IMR-90 (cell line): ENCODE measurements at regions of chr5 and their contacts with region 1.

Region 1: GRCh38 chr5:68499987-68500386 is 284.4 kb downstream of the PIK3R1 start:
- DNase-seq: peak; percentile 81
- ATAC-seq: peak; percentile 70
- H3K4me3 ChIP-seq: no peak overlapping the region
- H3K27ac ChIP-seq: peak overlapping the region; percentile 9; the same call in 1 of the 2 replicates
- H3K4me1 ChIP-seq: peaks cover 6% of the 10 kb centered on the region; the same call in 1 of the 2 replicates
- H3K27me3 ChIP-seq: no peaks in the 10 kb centered on the region
- CTCF ChIP-seq: no peak
- POLR2A ChIP-seq: no peak
- RAD21 ChIP-seq: no peak

Region 2: GRCh38 chr5:67530609-67531255 is 969.3 kb before region 1 on chr5:
- CTCF ChIA-PET with region 1: no interaction called
- POLR2A ChIA-PET with region 1: no interaction called
- dilution Hi-C with region 1: no loop called
- in situ Hi-C with region 1: no loop called
- intact Hi-C with region 1: no loop called
- DNase-seq: no peak
- ATAC-seq: no peak
- H3K4me3 ChIP-seq: no peak overlapping the region
- H3K27ac ChIP-seq: no peak overlapping the region
- H3K4me1 ChIP-seq: no peaks in the 10 kb centered on the region
- H3K27me3 ChIP-seq: no peaks in the 10 kb centered on the region
- CTCF ChIP-seq: no peak
- POLR2A ChIP-seq: no peak
- RAD21 ChIP-seq: no peak

Region 3: GRCh38 chr5:68435347-68436010 is 64.5 kb before region 1 on chr5:
- CTCF ChIA-PET with region 1: no interaction called
- POLR2A ChIA-PET with region 1: no interaction called
- dilution Hi-C with region 1: no loop called
- in situ Hi-C with region 1: no loop called
- intact Hi-C with region 1: loop called (anchors 2 kb)
- DNase-seq: no peak
- ATAC-seq: no peak
- H3K4me3 ChIP-seq: no peak overlapping the region
- H3K27ac ChIP-seq: no peak overlapping the region
- H3K4me1 ChIP-seq: peaks cover 7% of the 10 kb centered on the region; the same call in 1 of the 2 replicates
- H3K27me3 ChIP-seq: no peaks in the 10 kb centered on the region
- CTCF ChIP-seq: no peak
- POLR2A ChIP-seq: no peak
- RAD21 ChIP-seq: no peak

Region 4: DNA sequence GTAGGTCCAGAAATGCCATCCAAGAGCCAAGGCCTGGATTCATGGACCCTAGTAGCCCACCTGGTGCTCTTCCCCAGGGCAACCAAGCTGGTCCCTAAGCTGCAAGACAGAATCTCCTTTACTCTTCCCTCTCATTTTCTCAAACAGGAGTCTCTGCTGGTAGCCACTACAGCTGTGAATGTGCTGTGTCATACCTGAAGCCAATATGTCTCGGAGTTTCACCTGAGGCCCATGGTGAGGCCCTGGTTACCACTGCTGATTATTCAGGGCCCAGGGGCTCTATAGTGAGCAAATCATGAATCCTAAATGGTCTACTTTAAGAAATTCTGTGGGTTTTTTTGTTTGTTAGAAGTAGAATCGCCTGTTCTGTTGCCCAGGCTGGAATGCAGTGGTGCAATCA is 750.6 kb after region 1 on chr5:
- CTCF ChIA-PET with region 1: no interaction called
- POLR2A ChIA-PET with region 1: no interaction called
- dilution Hi-C with region 1: no loop called
- in situ Hi-C with region 1: no loop called
- intact Hi-C with region 1: no loop called
- DNase-seq: no peak
- ATAC-seq: peak; percentile 44; the same call in 1 of the 2 replicates
- H3K4me3 ChIP-seq: no peak overlapping the region
- H3K27ac ChIP-seq: peak overlapping the region; percentile 66; the same call in 1 of the 2 replicates
- H3K4me1 ChIP-seq: peaks cover 6% of the 10 kb centered on the region
- H3K27me3 ChIP-seq: no peaks in the 10 kb centered on the region
- CTCF ChIP-seq: no peak
- POLR2A ChIP-seq: no peak
- RAD21 ChIP-seq: no peak